OCI-LY7 (cell line): ENCODE measurements at regions of chr4 and their contacts with region 1.

Region 1: GRCh38 chr4:83034630-83035494 is at the start of gene COPS4:
- DNase-seq: peak; percentile 100
- H3K4me3 ChIP-seq: peak within 1 kb of the TSS; percentile 82
- H3K27ac ChIP-seq: peak within 1 kb of the TSS; percentile 78
- H3K4me1 ChIP-seq: peaks cover 33% of the 10 kb centered on the region
- CTCF ChIP-seq: peak; percentile 72
- total RNA-seq, gene COPS4: 38.9 and 44.2 TPM in 2 replicates

Region 2: GRCh38 chr4:82373816-82374625 is 660.8 kb before region 1 on chr4 and contains the start of gene HNRNPD:
- CTCF ChIA-PET with region 1: no interaction called
- POLR2A ChIA-PET with region 1: no interaction called
- intact Hi-C with region 1: loop called (anchors 5 kb)
- DNase-seq: peak; percentile 99
- H3K4me3 ChIP-seq: peak within 1 kb of the TSS; percentile 99
- H3K27ac ChIP-seq: peak within 1 kb of the TSS; percentile 85
- H3K4me1 ChIP-seq: peaks cover 29% of the 10 kb centered on the region
- CTCF ChIP-seq: no peak
- total RNA-seq, gene HNRNPD: 127 and 159 TPM in 2 replicates

Region 3: GRCh38 chr4:82398263-82398662 is 636.6 kb before region 1 on chr4:
- CTCF ChIA-PET with region 1: no interaction called
- POLR2A ChIA-PET with region 1: no interaction called
- intact Hi-C with region 1: no loop called
- DNase-seq: no peak
- H3K4me3 ChIP-seq: no peak overlapping the region
- H3K27ac ChIP-seq: no peak overlapping the region
- H3K4me1 ChIP-seq: no peaks in the 10 kb centered on the region
- CTCF ChIP-seq: no peak

Region 4: GRCh38 chr4:82890901-82891706 is 143.8 kb before region 1 on chr4 and contains the start of gene SEC31A:
- CTCF ChIA-PET with region 1: no interaction called
- POLR2A ChIA-PET with region 1: interaction called, 3 read pairs
- intact Hi-C with region 1: loop called (anchors 1 kb)
- DNase-seq: peak; percentile 97
- H3K4me3 ChIP-seq: peak within 1 kb of the TSS; percentile 80
- H3K27ac ChIP-seq: peak within 1 kb of the TSS; percentile 84
- H3K4me1 ChIP-seq: peaks cover 53% of the 10 kb centered on the region
- CTCF ChIP-seq: peak; percentile 44
- total RNA-seq, gene SEC31A: 80.0 and 93.4 TPM in 2 replicates

Region 5: DNA sequence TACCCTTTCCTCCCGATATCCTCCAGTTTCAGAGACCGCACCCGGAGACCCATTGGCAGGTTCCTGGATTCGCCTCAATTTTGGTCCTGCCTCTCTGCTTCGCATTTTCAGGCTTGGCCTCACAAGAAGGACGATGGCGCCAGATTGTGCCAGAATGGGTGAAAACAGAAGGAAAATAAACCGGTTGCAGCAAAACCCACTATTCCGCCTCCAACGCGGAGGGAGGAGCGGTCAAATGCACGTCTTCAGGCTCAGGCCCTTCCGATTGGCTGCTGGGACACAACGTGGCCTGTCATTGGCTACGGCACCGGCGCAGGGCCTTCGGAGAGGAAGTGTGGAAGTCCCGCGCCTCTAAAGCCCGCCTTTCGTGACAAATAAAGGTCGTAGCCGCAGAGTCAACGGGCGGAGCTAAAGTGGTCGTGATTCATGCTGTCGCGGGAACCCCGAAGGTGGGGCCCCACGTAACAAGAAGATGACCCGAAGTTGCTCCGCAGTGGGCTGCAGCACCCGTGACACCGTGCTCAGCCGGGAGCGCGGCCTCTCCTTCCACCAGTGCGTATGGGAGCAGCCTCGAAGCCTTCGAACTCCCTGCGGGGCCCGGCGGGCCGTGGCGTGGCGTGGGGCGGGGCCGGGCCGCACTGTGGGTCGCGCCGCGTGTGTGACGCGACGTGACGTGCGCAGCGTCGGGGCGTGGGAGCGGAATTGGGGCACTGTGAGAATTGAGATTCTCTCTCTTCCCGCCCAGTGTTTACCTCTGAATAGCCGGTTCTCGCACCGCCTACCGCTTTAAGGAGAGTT is 134.3 kb before region 1 on chr4 and contains the start of gene THAP9:
- CTCF ChIA-PET with region 1: interaction called, 9 read pairs
- POLR2A ChIA-PET with region 1: interaction called, 9 read pairs
- intact Hi-C with region 1: loop called (anchors 2 kb)
- DNase-seq: peak; percentile 99
- H3K4me3 ChIP-seq: peak within 1 kb of the TSS; percentile 85
- H3K27ac ChIP-seq: peak within 1 kb of the TSS; percentile 87
- H3K4me1 ChIP-seq: peaks cover 42% of the 10 kb centered on the region
- CTCF ChIP-seq: no peak
- total RNA-seq, gene THAP9: 13.2 and 16.4 TPM in 2 replicates

Region 6: GRCh38 chr4:82968972-82969371 is 65.9 kb before region 1 on chr4:
- CTCF ChIA-PET with region 1: no interaction called
- POLR2A ChIA-PET with region 1: interaction called, 8 read pairs
- intact Hi-C with region 1: loop called (anchors 2 kb)
- DNase-seq: peak; percentile 70
- H3K4me3 ChIP-seq: peak overlapping the region; percentile 51
- H3K27ac ChIP-seq: peak overlapping the region; percentile 98
- H3K4me1 ChIP-seq: peaks cover 72% of the 10 kb centered on the region
- CTCF ChIP-seq: no peak

Region 7: DNA sequence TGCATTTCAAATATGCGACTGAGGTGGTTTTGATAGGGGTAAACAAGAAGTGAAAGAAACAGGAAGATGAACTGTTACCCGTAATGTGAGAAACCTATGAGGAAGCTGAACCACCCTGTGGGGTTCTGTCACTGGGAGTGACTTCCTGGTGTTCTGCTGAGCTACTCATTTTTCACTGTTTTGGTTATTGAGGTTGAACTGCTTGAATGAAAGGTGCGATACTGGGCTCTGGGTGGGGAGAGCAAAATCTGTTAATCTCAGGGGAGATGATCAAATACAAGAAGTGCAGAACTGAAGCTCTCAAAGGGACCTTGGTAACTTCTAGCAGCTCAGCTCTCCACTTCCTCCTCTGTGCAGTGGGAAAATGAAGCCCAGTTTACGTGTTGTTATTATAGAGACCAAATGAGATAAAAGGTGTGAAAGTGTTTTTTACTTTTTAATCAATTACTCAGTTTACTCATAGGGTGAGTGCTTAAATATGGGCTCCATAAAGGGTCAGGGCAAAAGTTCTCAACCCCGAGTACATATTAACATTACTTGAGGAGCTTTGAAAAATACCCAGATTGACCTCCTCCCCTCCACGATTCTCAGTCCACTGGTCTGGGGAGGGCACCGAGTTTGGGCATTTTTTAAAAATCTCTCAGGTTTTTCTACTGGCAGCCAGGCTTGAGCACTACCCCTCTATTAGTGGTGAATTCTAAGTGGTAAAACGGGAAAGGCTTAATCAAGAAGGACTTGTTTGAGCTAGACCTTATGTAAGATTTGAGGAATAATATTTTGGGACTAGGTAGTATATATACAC is 183.1 kb after region 1 on chr4:
- CTCF ChIA-PET with region 1: no interaction called
- POLR2A ChIA-PET with region 1: interaction called, 3 read pairs
- intact Hi-C with region 1: loop called (anchors 1 kb)
- DNase-seq: peak; percentile 95
- H3K4me3 ChIP-seq: peak overlapping the region; percentile 43
- H3K27ac ChIP-seq: peak overlapping the region; percentile 86
- H3K4me1 ChIP-seq: peaks cover 81% of the 10 kb centered on the region
- CTCF ChIP-seq: no peak

Region 8: DNA sequence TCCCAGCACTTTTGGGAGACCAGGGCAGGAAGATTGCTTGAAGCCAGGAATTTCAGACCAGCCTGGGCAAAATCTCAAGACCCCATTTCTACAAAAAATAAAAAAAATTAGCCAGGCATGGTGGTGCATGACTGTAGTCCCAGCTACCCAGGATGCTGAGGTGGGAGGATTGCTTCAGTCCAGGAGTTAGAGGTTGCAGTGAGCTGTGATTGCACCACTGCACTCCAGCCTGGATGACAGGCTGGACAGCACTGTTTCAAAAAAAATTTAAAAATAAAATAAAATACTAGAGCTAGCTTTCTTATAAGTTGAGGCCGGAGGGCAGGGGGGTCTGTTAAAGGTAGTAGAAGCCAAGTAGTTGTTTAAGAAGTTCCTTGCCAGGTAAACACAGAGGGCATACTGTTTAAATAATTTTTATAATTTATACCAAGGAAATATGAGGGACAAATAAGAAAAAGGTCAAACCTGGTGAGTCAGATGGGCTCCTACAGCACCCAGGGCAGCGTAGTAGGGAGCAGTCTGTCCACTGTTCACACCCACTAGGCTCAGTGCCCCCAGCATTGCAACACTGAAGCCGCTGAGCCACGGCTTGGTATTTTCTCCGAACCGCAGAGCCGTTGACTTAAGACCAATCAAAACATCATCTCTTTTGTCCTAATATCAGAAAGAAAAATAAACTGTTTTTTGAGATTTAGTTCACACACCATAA is 232.4 kb after region 1 on chr4:
- CTCF ChIA-PET with region 1: no interaction called
- POLR2A ChIA-PET with region 1: interaction called, 11 read pairs
- intact Hi-C with region 1: no loop called
- DNase-seq: no peak
- H3K4me3 ChIP-seq: no peak overlapping the region
- H3K27ac ChIP-seq: no peak overlapping the region
- H3K4me1 ChIP-seq: no peaks in the 10 kb centered on the region
- CTCF ChIP-seq: no peak